ENCODE measurements at regions of chr16 and their contacts with region 1.

Region 1: GRCh38 chr16:50806099-50807062 is 64.5 kb downstream of the CYLD start:
- H3K4me3 ChIP-seq: peak overlapping the region; percentile 21
- H3K27ac ChIP-seq: no peak overlapping the region
- H3K4me1 ChIP-seq: no peaks in the 10 kb centered on the region
- CTCF ChIP-seq: peak; percentile 92

Region 2: DNA sequence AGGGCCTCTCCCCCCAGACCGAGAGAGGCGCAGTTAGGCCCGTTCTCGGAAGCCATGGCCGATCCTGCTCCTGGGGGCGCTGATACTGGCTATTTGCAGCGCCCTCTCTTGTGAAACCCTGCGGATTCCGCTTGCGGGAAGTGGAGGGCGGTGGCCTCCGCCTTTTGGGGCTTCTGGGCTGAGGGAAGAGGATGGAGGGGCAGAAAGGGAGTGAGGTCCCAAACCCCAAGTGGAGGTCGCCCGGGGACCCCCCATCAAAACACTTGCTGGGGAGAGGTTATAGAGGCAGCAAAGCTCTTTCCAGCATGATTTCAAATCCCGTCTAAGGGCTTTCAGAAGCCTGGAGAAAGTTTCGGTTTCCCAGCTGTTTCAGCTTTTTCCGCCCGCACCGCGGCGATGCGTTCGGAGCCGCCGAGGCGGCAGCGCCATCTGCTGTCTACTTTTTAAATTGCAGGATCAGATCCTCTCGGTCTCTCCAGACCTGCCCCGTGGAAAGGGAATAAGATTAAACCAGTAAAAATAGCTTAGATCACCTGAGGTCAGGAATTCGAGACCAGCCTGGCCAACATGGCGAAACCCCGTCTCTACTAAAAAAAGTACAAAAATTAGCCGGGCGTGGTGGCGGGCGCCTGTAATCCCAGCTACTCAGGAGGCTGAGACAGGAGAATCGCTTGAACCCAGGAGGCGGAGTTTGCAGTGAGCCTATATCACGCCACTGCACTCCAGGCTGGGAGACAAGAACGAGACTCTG is 141.1 kb before region 1 on chr16:
- CTCF ChIA-PET with region 1: interaction called, 145 read pairs
- POLR2A ChIA-PET with region 1: interaction called, 4 read pairs
- H3K4me3 ChIP-seq: peak overlapping the region; percentile 6
- H3K27ac ChIP-seq: no peak overlapping the region
- H3K4me1 ChIP-seq: no peaks in the 10 kb centered on the region
- CTCF ChIP-seq: peak; percentile 66

Region 3: GRCh38 chr16:50771366-50771765 is 35.0 kb before region 1 on chr16:
- CTCF ChIA-PET with region 1: interaction called, 12 read pairs
- POLR2A ChIA-PET with region 1: no interaction called
- H3K4me3 ChIP-seq: no peak overlapping the region
- H3K27ac ChIP-seq: no peak overlapping the region
- H3K4me1 ChIP-seq: no peaks in the 10 kb centered on the region
- CTCF ChIP-seq: no peak

Region 4: GRCh38 chr16:50781043-50781442 is 25.3 kb before region 1 on chr16:
- CTCF ChIA-PET with region 1: interaction called, 38 read pairs
- POLR2A ChIA-PET with region 1: no interaction called
- H3K4me3 ChIP-seq: no peak overlapping the region
- H3K27ac ChIP-seq: no peak overlapping the region
- H3K4me1 ChIP-seq: no peaks in the 10 kb centered on the region
- CTCF ChIP-seq: no peak

Region 5: DNA sequence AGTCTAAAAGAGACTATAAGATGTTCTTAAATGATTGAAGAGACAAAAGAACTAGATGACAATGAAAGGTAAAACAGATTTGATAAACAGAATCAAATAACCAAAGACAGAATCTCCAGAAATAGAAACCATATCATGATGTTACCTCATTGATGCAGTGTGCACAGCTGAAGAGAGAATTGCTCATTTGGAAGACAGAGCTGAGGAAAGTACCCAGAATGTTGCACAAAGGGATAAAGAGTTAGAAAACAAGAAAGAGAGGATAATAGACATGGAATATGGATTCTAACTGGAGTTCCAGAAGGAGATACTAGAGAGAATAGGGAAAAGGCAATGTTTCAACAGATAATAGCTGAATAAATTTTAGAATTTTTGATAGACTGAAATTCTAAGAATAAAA is 16.6 kb before region 1 on chr16:
- CTCF ChIA-PET with region 1: interaction called, 48 read pairs
- POLR2A ChIA-PET with region 1: no interaction called
- H3K4me3 ChIP-seq: no peak overlapping the region
- H3K27ac ChIP-seq: no peak overlapping the region
- H3K4me1 ChIP-seq: no peaks in the 10 kb centered on the region
- CTCF ChIP-seq: no peak

Region 6: GRCh38 chr16:50816901-50817555 is 10.6 kb after region 1 on chr16:
- CTCF ChIA-PET with region 1: interaction called, 16 read pairs
- POLR2A ChIA-PET with region 1: no interaction called
- H3K4me3 ChIP-seq: no peak overlapping the region
- H3K27ac ChIP-seq: no peak overlapping the region
- H3K4me1 ChIP-seq: no peaks in the 10 kb centered on the region
- CTCF ChIP-seq: no peak

Region 7: DNA sequence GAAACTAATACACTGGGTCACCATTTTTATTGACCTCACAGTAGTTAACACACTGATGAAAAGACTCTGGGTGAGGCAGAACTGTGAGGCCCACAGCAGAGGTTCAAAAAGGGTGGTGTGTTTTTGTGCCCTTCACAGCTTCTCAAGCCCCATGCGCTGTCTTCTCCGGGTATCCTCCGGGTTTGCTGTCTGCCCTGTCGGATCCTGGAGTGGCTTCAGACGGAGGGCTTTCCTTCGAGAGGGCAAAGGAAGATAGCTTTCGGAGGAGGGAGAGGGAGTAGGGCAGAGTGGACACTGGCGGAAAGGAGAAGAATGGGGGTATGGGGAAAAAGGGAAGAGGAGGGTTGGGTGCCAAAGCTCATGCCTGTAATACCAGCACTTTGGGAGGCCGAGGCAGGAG is 16.3 kb after region 1 on chr16:
- CTCF ChIA-PET with region 1: interaction called, 28 read pairs
- POLR2A ChIA-PET with region 1: no interaction called
- H3K4me3 ChIP-seq: no peak overlapping the region
- H3K27ac ChIP-seq: no peak overlapping the region
- H3K4me1 ChIP-seq: no peaks in the 10 kb centered on the region
- CTCF ChIP-seq: no peak

Region 8: GRCh38 chr16:51276336-51276735 is 470.0 kb after region 1 on chr16:
- CTCF ChIA-PET with region 1: no interaction called
- POLR2A ChIA-PET with region 1: no interaction called
- H3K4me3 ChIP-seq: no peak overlapping the region
- H3K27ac ChIP-seq: no peak overlapping the region
- H3K4me1 ChIP-seq: no peaks in the 10 kb centered on the region
- CTCF ChIP-seq: no peak

Measured in HEK293 (cell line).